Posterior vena cava (tissue), 2 donors: ENCODE measurements at regions of chr6 and their contacts with region 1.

Region 1: DNA sequence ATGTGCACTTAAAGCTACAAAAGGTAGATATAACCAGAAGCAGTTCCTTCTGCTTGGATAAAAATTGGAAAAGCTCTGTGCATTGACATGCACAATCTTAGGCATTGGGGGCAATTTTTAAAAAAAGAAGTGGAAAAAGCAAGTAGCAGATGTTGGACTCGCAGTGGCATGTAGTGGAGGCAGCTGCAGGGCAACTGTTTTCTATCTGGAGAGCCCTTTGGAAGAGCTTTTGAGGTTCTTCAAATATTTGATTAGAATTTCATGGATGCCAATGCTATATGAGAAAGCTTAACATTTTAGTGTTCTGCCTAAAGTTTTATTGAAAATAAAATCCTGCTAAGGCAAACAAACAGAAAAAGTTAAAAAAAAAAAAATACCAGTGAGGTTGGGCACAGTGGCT is 388.3 kb upstream of the RNF217 start:
- DNase-seq: no peak

Region 2: GRCh38 chr6:124622351-124622750 is 48.4 kb after region 1 on chr6:
- intact Hi-C with region 1: loop called in 1 of 2 experiments (anchors 2 kb)
- DNase-seq: no peak